Psoas muscle (tissue), 8 donors: ENCODE measurements at regions of chr10 and their contacts with region 1.

Region 1: DNA sequence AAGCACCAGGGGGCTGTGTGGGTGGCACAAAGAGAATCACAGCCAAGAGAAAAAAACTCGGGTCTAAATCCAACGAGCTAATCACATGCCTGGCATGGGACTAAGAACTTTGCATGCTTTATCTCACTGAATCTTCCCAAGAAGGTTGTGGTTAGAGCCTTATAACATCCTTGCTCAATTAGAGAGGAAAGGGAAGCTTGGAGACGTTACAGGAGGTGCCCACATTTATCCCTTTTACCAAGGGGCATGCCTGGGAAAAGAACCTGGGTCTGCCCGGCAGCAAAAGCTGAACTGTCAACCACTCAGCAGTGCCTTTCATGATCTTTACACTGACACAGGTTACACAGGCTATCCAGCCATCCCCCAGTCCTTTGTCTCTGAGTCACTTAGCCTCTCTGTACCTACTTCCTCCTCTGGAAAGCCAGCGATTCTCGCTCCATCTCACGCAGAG is 190.1 kb downstream of the PRPF18 start:
- DNase-seq: no peak
- ATAC-seq: no peak
- H3K4me3 ChIP-seq: no peak overlapping the region
- H3K27ac ChIP-seq: no peak overlapping the region
- H3K4me1 ChIP-seq: no peaks in the 10 kb centered on the region
- H3K27me3 ChIP-seq: peaks cover 0 to 10% (median 0%) of the 10 kb centered on the region in 3 donors
- CTCF ChIP-seq: no peak

Region 2: GRCh38 chr10:13087986-13088618 is 688.8 kb before region 1 on chr10:
- intact Hi-C with region 1: no loop called
- DNase-seq: no peak
- ATAC-seq: peak in 2 of 4 donors; percentile 50 to 78
- H3K4me3 ChIP-seq: no peak overlapping the region
- H3K27ac ChIP-seq: no peak overlapping the region
- H3K4me1 ChIP-seq: no peaks in the 10 kb centered on the region
- H3K27me3 ChIP-seq: no peaks in the 10 kb centered on the region
- CTCF ChIP-seq: no peak

Region 3: DNA sequence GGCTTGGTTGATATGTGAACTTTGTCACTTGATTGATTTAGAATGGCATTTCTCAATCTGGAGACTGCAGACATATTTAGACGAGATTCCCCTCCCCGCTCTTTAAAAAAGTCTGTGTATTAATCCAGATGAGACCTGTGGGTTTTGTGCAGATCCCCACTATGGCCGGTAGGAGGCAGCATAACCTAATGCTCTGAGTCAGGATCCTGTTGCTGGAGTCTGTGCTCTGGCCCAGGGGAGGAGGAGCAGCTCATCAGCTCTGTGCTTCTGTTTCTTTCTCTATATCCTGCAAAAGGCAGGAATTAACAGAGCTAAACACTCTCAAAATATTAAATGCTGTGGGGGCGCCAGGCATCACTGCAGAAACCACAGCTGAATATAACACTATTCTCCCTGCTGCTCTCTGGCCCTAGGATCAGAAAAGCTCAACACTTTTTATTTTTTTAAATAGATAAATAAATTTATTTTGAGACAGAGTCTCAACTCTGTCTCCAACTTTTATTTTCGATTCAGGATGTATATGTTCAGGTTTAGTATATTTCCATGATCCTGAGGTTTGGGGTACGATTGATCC is 404.9 kb before region 1 on chr10:
- intact Hi-C with region 1: loop called in 1 of 2 experiments (anchors 10 kb)
- DNase-seq: peak; percentile 42 to 67
- ATAC-seq: peak; percentile 75 to 89 (median 84)
- H3K4me3 ChIP-seq: no peak overlapping the region
- H3K27ac ChIP-seq: no peak overlapping the region
- H3K4me1 ChIP-seq: no peaks in the 10 kb centered on the region
- H3K27me3 ChIP-seq: no peaks in the 10 kb centered on the region
- CTCF ChIP-seq: peak; percentile 85

Region 4: DNA sequence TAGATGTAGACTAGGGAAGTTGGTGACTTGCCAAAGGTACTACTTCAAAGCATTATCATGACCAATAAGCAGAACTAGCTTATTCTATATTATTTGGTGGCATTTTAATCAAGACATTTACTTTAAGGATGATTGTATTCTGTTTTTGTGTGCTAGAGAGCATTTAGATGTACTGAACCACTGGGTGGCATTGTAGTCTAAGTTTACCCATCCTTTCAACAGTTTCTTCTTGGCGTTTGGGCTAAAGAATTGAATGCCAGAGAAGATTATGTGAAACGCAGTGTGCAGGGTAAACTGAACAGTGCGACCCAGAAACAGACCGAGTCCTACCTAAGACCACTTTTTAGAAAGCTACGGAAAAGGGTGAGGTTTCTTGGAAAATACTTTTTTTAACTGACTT is 163.4 kb before region 1 on chr10:
- intact Hi-C with region 1: loop called (anchors 2 to 5 kb)
- DNase-seq: no peak
- ATAC-seq: peak; percentile 34 to 81 (median 54)
- H3K4me3 ChIP-seq: no peak overlapping the region
- H3K27ac ChIP-seq: peak overlapping the region; percentile 6
- H3K4me1 ChIP-seq: peaks cover 34% of the 10 kb centered on the region
- H3K27me3 ChIP-seq: no peaks in the 10 kb centered on the region
- CTCF ChIP-seq: peak; percentile 52

Region 5: GRCh38 chr10:13659897-13660550 is 116.9 kb before region 1 on chr10:
- intact Hi-C with region 1: loop called (anchors 1 kb)
- DNase-seq: peak; percentile 72 to 83
- ATAC-seq: peak; percentile 47 to 85 (median 64)
- H3K4me3 ChIP-seq: no peak overlapping the region
- H3K27ac ChIP-seq: no peak overlapping the region
- H3K4me1 ChIP-seq: peaks cover 8% of the 10 kb centered on the region
- H3K27me3 ChIP-seq: no peaks in the 10 kb centered on the region
- CTCF ChIP-seq: peak; percentile 94

Region 6: GRCh38 chr10:13717931-13718772 is 58.7 kb before region 1 on chr10:
- intact Hi-C with region 1: loop called in 1 of 2 experiments (anchors 5 kb)
- DNase-seq: peak; percentile 77 to 83
- ATAC-seq: peak; percentile 82 to 94 (median 90)
- H3K4me3 ChIP-seq: peak overlapping the region; percentile 48
- H3K27ac ChIP-seq: peak overlapping the region; percentile 24
- H3K4me1 ChIP-seq: peaks cover 4% of the 10 kb centered on the region
- H3K27me3 ChIP-seq: no peaks in the 10 kb centered on the region
- CTCF ChIP-seq: no peak

Region 7: GRCh38 chr10:14185316-14186045 is 408.6 kb after region 1 on chr10:
- intact Hi-C with region 1: no loop called
- DNase-seq: no peak
- ATAC-seq: no peak
- H3K4me3 ChIP-seq: no peak overlapping the region
- H3K27ac ChIP-seq: no peak overlapping the region
- H3K4me1 ChIP-seq: no peaks in the 10 kb centered on the region
- H3K27me3 ChIP-seq: peaks cover 0 to 6% (median 1%) of the 10 kb centered on the region in 3 donors
- CTCF ChIP-seq: no peak